ENCODE measurements at regions of chr2 and their contacts with region 1.

Region 1: GRCh38 chr2:166862468-166863132 is 25.7 kb upstream of the XIRP2 start:
- DNase-seq: peak; percentile 86
- ATAC-seq: peak; percentile 97
- H3K4me3 ChIP-seq: no peak overlapping the region
- H3K27ac ChIP-seq: peak overlapping the region; percentile 70
- H3K4me1 ChIP-seq: peaks cover 14% of the 10 kb centered on the region
- H3K27me3 ChIP-seq: no peaks in the 10 kb centered on the region
- CTCF ChIP-seq: no peak

Region 2: DNA sequence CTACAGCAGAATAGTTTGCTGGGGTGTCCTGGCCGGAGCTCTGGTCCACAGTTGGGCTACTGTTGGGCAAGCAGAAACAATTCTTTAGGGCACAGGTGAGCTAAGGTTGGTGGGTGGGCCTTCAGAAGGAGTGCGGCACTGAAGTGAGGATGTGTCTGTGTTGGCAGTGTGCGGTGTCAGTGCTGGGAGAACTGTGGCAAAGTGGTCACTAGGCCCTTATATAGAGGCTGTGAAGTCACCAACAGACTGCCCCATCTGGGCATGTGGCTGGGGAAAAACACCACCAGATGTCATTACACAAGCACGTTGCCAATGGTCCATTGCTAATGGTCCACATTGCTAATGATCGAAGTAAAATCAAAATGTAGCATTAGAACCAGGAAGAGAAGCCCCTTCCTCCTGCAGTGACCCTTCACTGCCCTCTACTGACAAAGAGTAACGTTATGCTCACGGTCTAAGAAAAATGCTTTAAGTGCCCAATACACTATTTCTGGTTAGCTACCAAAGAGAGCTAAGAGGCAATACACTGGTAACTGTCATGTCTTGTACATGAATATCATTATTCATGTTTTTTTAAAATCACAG is 756.1 kb before region 1 on chr2:
- CTCF ChIA-PET with region 1: no interaction called
- POLR2A ChIA-PET with region 1: no interaction called
- intact Hi-C with region 1: no loop called
- DNase-seq: peak; percentile 37
- ATAC-seq: 0 out of 2 replicates have a peak, but pooled peaks have one; percentile 22
- H3K4me3 ChIP-seq: no peak overlapping the region
- H3K27ac ChIP-seq: no peak overlapping the region
- H3K4me1 ChIP-seq: no peaks in the 10 kb centered on the region
- H3K27me3 ChIP-seq: no peaks in the 10 kb centered on the region
- CTCF ChIP-seq: peak; percentile 63

Region 3: GRCh38 chr2:166550923-166551322 is 311.7 kb before region 1 on chr2:
- CTCF ChIA-PET with region 1: no interaction called
- POLR2A ChIA-PET with region 1: interaction called, 11 read pairs
- intact Hi-C with region 1: no loop called
- DNase-seq: no peak
- ATAC-seq: no peak
- H3K4me3 ChIP-seq: no peak overlapping the region
- H3K27ac ChIP-seq: no peak overlapping the region
- H3K4me1 ChIP-seq: no peaks in the 10 kb centered on the region
- H3K27me3 ChIP-seq: no peaks in the 10 kb centered on the region
- CTCF ChIP-seq: no peak

Region 4: DNA sequence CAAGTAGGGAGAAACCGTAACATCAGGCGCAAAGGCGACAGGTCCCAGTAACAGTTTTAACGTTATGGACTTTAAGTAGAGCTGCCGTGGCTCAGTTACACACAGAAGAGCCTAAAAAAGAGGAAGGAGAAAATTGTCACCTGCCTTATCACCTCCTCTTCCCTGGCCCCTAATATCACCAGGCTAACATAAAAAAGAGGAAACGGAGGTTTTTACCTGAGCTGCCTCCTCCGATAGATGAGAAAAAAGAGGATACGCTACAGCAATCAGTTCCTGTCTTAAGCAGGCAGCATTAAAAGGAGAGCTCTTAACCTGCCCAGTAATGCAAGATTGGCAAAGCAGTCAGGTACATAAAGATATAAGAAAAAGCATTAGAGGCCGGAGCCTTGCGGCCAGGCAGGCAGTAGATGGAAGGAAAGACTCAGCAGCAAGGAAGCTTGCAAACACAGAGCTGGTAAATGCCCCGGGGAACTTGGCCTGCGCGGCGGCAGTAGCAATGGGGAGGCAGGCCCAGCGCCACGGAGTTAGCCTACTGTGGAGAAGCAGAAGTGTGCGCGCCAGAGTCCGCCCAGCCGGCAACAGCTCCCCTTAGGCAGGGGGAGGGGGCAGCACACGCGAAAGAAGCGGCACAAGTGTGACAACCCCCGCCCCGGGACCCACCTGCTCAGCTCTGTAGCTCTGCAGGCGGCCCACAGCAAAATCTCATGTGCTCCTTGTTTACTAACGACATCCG is 252.3 kb before region 1 on chr2:
- CTCF ChIA-PET with region 1: no interaction called
- POLR2A ChIA-PET with region 1: no interaction called
- intact Hi-C with region 1: no loop called
- DNase-seq: no peak
- ATAC-seq: no peak
- H3K4me3 ChIP-seq: no peak overlapping the region
- H3K27ac ChIP-seq: no peak overlapping the region
- H3K4me1 ChIP-seq: no peaks in the 10 kb centered on the region
- H3K27me3 ChIP-seq: no peaks in the 10 kb centered on the region
- CTCF ChIP-seq: no peak